Endothelial cell of umbilical vein (primary cell): ENCODE measurements at regions of chr16 and their contacts with region 1.

Region 1: GRCh38 chr16:84952335-84953189 is 58.8 kb downstream of the ZDHHC7 start:
- DNase-seq: peak; percentile 87
- H3K4me3 ChIP-seq: no peak overlapping the region
- H3K27ac ChIP-seq: no peak overlapping the region
- H3K4me1 ChIP-seq: no peaks in the 10 kb centered on the region
- H3K27me3 ChIP-seq: peaks cover 0 to 2% of the 10 kb centered on the region in 2 experiments
- CTCF ChIP-seq: peak; percentile 88 to 90
- POLR2A ChIP-seq: no peak

Region 2: DNA sequence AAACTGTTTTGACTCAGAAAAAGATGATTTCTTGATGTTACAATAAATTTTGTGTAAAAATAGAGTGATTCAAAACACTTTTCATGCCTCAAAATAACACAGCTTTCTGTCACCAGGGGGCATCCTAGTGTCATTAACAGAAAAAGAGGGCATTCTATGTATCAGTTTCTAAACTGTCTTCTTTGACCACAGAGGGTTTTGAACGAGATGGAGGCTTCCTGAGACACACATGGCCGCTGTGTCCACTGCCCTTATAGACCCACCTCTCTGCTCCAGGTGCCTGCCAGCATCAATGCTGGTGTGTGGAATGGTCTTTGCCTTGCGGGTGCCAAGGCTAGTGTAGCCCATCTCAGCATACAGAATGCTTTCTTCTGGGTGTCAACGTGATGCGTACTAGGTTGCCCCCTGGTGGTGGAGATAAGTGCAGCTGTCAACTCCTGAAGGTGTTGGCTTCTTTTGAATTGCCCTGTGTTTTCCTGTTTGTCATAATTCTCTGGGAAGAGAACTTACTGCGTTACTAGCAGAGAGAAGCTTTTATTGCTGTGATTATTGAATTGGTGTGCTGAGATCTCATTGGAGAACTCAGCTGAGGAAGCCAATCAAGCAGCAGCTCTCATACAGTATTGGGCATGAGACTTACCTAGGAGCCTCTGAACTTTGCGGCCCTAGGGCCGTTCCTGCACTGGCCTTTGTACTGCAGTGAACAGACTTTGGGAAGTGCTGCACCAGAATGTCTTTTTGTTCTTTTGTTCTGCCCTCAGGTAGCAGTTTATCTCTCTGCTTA is 214.1 kb before region 1 on chr16:
- CTCF ChIA-PET with region 1: interaction called, 14 read pairs
- POLR2A ChIA-PET with region 1: no interaction called
- dilution Hi-C with region 1: no loop called
- intact Hi-C with region 1: no loop called
- DNase-seq: peak; percentile 92
- H3K4me3 ChIP-seq: no peak overlapping the region
- H3K27ac ChIP-seq: no peak overlapping the region
- H3K4me1 ChIP-seq: peaks cover 28% of the 10 kb centered on the region
- H3K27me3 ChIP-seq: no peaks in the 10 kb centered on the region
- CTCF ChIP-seq: peak; percentile 88 to 92
- POLR2A ChIP-seq: no peak

Region 3: DNA sequence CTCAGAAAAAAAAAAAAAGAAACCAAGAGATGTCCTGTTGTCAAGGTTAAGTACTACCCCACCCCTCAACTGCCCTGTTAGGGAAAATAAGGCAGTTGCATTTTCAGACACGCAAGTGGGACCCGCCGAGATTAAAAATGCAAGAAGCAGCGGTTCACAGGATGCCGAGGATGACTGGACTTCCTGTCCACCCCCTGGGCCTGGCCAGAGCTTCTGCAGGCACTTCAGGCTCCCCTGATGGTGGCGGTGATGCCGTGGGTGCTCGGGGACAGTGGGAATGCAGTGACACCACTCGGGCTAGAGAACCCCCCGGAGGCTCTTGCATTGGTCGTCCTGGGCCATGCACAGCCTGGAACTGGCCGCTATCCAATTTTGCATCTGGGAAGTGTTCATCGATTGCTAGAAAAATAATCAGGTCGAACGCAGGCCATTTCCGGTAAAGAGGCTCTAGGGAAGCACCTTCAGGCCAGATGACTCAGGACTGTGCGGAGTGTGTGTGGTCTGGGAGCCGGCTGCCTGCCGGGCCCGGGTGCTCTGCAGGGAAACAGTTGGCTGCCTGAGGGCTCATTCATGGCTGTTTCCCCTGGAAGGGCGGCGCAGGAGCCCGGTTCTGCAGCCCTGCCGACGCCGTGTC is 146.2 kb before region 1 on chr16:
- CTCF ChIA-PET with region 1: no interaction called
- POLR2A ChIA-PET with region 1: no interaction called
- dilution Hi-C with region 1: no loop called
- intact Hi-C with region 1: loop called (anchors 1 kb)
- DNase-seq: peak; percentile 80
- H3K4me3 ChIP-seq: peak overlapping the region in 1 of 3 experiments; percentile 28
- H3K27ac ChIP-seq: peak overlapping the region; percentile 41
- H3K4me1 ChIP-seq: peaks cover 19% of the 10 kb centered on the region
- H3K27me3 ChIP-seq: peaks cover 2 to 6% of the 10 kb centered on the region in 2 experiments
- CTCF ChIP-seq: no peak
- POLR2A ChIP-seq: no peak

Region 4: GRCh38 chr16:84898447-84898846 is 54.1 kb before region 1 on chr16:
- CTCF ChIA-PET with region 1: no interaction called
- POLR2A ChIA-PET with region 1: no interaction called
- dilution Hi-C with region 1: no loop called
- intact Hi-C with region 1: no loop called
- DNase-seq: peak; percentile 24
- H3K4me3 ChIP-seq: no peak overlapping the region
- H3K27ac ChIP-seq: no peak overlapping the region
- H3K4me1 ChIP-seq: no peaks in the 10 kb centered on the region
- H3K27me3 ChIP-seq: peaks cover 0 to 2% of the 10 kb centered on the region in 2 experiments
- CTCF ChIP-seq: no peak
- POLR2A ChIP-seq: no peak

Region 5: DNA sequence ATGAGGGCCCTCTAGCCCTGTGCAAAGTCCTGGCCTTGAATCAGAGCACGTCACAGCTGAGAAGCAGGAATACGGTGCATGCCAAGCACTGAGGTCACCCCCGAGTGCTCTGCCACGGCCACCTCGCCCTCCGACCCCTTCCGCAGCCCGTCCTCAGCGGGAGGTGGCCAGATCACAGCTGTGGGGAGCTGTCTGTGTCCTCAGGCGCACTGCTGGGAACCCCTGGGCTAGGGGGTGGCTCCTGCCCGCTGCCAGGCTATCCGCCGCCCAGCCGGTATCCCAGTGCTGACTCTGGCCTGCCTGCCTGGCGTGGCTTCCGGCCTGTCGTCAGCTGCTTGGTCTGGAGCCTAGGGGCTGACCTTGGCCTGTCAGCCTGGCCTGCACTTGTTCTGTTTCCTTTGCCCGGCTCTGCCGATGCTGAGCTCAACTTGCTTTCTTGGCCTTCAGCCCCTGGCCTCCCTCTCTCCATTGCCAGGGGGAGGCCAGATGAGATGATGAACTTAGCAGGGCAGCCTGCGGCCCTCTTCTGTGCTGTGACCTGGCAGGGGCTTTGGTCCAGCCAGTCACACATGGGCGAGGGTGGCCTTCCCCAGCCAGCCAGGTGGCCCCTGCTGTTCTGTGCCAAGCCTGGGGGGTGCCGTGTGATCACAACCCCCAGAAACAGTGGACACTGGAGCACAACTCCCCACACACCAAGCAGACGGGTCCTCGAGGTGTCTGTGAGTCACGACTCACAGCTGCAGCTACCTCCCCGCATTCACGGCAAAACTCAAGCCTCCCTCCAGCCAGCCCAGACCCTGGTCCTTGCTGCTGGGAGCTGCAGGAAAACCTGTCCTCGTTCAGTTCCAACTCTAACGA is 18.6 kb before region 1 on chr16:
- CTCF ChIA-PET with region 1: interaction called, 57 read pairs
- POLR2A ChIA-PET with region 1: no interaction called
- dilution Hi-C with region 1: no loop called
- intact Hi-C with region 1: no loop called
- DNase-seq: no peak
- H3K4me3 ChIP-seq: no peak overlapping the region
- H3K27ac ChIP-seq: no peak overlapping the region
- H3K4me1 ChIP-seq: peaks cover 4% of the 10 kb centered on the region
- H3K27me3 ChIP-seq: no peaks in the 10 kb centered on the region
- CTCF ChIP-seq: no peak
- POLR2A ChIP-seq: no peak

Region 6: DNA sequence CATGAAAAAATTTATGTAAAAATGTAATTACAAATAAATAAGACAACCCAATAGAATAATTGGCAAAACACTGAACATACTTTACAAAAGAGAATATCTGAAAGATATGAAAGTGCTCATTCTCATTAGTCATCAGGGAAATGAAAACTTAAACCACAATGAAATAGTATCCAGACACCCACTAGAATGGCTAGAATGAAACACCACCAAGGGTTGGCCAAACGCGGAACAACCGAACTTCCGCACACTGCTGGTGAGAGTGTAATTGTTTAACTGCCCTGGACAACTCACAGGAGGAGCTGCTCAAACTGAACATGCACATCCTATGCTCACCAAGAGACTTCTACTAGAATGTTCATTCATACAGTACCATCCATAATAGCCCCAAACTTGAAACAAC is 64.6 kb after region 1 on chr16:
- CTCF ChIA-PET with region 1: no interaction called
- POLR2A ChIA-PET with region 1: no interaction called
- dilution Hi-C with region 1: no loop called
- intact Hi-C with region 1: no loop called
- DNase-seq: no peak
- H3K4me3 ChIP-seq: no peak overlapping the region
- H3K27ac ChIP-seq: no peak overlapping the region
- H3K4me1 ChIP-seq: peaks cover 4% of the 10 kb centered on the region
- H3K27me3 ChIP-seq: peaks cover 2 to 5% of the 10 kb centered on the region in 2 experiments
- CTCF ChIP-seq: no peak
- POLR2A ChIP-seq: no peak